Aorta (tissue), 5 donors: ENCODE measurements at regions of chr17 and their contacts with region 1.

Region 1: DNA sequence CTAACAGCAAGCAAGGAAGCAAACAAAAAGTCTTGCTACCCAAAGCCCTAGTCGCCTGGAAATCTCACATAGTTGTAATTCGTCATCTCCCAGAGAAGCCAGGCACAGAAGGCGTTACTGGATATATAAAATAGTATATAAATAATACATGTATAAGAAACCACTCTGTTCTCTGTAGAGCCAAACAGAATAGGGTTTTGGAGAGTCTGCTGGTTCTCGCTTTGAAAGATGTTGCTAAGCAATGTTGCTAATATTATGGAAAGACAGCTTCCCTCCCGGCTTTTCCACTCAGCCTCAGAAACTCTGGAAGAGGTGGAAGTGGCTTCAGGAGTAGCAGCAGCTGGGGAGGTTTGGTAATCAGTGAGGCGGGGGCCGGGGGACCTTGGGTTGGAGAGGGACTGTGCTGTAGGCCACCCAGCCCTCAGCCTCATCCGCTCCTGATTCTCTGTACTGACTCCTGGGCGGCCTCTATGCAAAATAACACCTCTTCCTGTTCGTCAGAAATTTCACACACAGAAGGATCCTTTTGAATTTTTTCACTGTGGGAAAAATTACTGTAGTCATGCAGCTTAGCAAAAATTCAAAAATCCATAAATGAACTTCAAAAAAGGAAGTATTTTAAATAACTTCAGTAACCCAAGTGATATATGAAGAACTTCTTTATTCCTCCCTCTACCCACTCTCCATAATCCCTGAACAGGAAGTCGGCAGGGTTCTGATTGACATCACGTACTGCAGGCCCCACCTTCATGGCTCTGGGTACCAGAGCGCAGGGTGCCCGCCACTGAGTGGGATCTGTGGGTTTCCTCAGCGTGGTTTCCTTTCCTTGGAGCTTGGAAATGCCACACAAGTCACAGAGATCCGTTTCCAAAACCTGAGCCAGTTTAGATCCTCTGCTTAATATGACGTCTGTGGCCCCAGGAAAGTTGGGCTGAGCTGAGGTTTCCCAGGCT is 51.4 kb downstream of the RAP1GAP2 start:
- DNase-seq: no peak
- ATAC-seq: no peak
- H3K4me3 ChIP-seq: no peak overlapping the region
- H3K27ac ChIP-seq: no peak overlapping the region
- H3K4me1 ChIP-seq: no peaks in the 10 kb centered on the region
- H3K27me3 ChIP-seq: no peaks in the 10 kb centered on the region

Region 2: GRCh38 chr17:3012926-3013581 is 165.4 kb after region 1 on chr17:
- intact Hi-C with region 1: loop called (anchors 5 kb)
- DNase-seq: peak; percentile 76 to 81
- ATAC-seq: peak; percentile 84
- H3K4me3 ChIP-seq: no peak overlapping the region
- H3K27ac ChIP-seq: no peak overlapping the region
- H3K4me1 ChIP-seq: no peaks in the 10 kb centered on the region
- H3K27me3 ChIP-seq: no peaks in the 10 kb centered on the region